Activated CD4-positive, alpha-beta T cell treated with anti-CD3 and anti-CD28 coated beads, Interleukin-2, amount 10 ng/mL, durations not matched to agents 24 days and 14 days (primary cell): ENCODE measurements at regions of chr12 and their contacts with region 1.

Region 1: GRCh38 chr12:49296836-49297694 is 2.1 kb downstream of the PRPH start:
- DNase-seq: peak; percentile 77
- H3K4me3 Mint-ChIP-seq: peak overlapping the region; percentile 75
- H3K27ac Mint-ChIP-seq: no peak overlapping the region
- H3K4me1 Mint-ChIP-seq: peaks cover 27% of the 10 kb centered on the region
- H3K27me3 Mint-ChIP-seq: peaks cover 58% of the 10 kb centered on the region

Region 2: GRCh38 chr12:49279706-49280159 is 17.3 kb before region 1 on chr12:
- intact Hi-C with region 1: no loop called
- DNase-seq: no peak
- H3K4me3 Mint-ChIP-seq: no peak overlapping the region
- H3K27ac Mint-ChIP-seq: no peak overlapping the region
- H3K4me1 Mint-ChIP-seq: no peaks in the 10 kb centered on the region
- H3K27me3 Mint-ChIP-seq: peaks cover 20% of the 10 kb centered on the region

Region 3: GRCh38 chr12:49331380-49332222 is 34.5 kb after region 1 on chr12:
- intact Hi-C with region 1: loop called (anchors 1 kb)
- DNase-seq: no peak
- H3K4me3 Mint-ChIP-seq: no peak overlapping the region
- H3K27ac Mint-ChIP-seq: no peak overlapping the region
- H3K4me1 Mint-ChIP-seq: peaks cover 9% of the 10 kb centered on the region
- H3K27me3 Mint-ChIP-seq: peaks cover 36% of the 10 kb centered on the region